Activated B cell treated with CpG ODN at 0.5 μM for 24 hours (primary cell): ENCODE measurements at regions of chr5 and their contacts with region 1.

Region 1: GRCh38 chr5:78269088-78269703 is 25.3 kb downstream of the AP3B1 start:
- DNase-seq: no peak
- ATAC-seq: peak; percentile 61
- H3K4me3 Mint-ChIP-seq: no peak overlapping the region
- H3K27ac Mint-ChIP-seq: no peak overlapping the region
- H3K4me1 Mint-ChIP-seq: peaks cover 21% of the 10 kb centered on the region
- H3K27me3 Mint-ChIP-seq: no peaks in the 10 kb centered on the region
- CTCF ChIP-seq: peak; percentile 36

Region 2: GRCh38 chr5:77143998-77144836 is 1125.0 kb before region 1 on chr5:
- CTCF ChIA-PET with region 1: no interaction called
- POLR2A ChIA-PET with region 1: no interaction called
- intact Hi-C with region 1: loop called (anchors 1 kb)
- DNase-seq: no peak
- ATAC-seq: peak; percentile 65
- H3K4me3 Mint-ChIP-seq: no peak overlapping the region
- H3K27ac Mint-ChIP-seq: no peak overlapping the region
- H3K4me1 Mint-ChIP-seq: peaks cover 2% of the 10 kb centered on the region
- H3K27me3 Mint-ChIP-seq: peaks cover 2% of the 10 kb centered on the region
- CTCF ChIP-seq: no peak

Region 3: GRCh38 chr5:77518304-77518703 is 750.9 kb before region 1 on chr5:
- CTCF ChIA-PET with region 1: no interaction called
- POLR2A ChIA-PET with region 1: no interaction called
- intact Hi-C with region 1: loop called (anchors 1 kb)
- DNase-seq: no peak
- ATAC-seq: no peak
- H3K4me3 Mint-ChIP-seq: no peak overlapping the region
- H3K27ac Mint-ChIP-seq: no peak overlapping the region
- H3K4me1 Mint-ChIP-seq: no peaks in the 10 kb centered on the region
- H3K27me3 Mint-ChIP-seq: peaks cover 5% of the 10 kb centered on the region
- CTCF ChIP-seq: no peak

Region 4: GRCh38 chr5:77645158-77645994 is 623.8 kb before region 1 on chr5:
- CTCF ChIA-PET with region 1: no interaction called
- POLR2A ChIA-PET with region 1: no interaction called
- intact Hi-C with region 1: loop called (anchors 5 kb)
- DNase-seq: peak; percentile 66
- ATAC-seq: peak; percentile 83
- H3K4me3 Mint-ChIP-seq: peak overlapping the region; percentile 75
- H3K27ac Mint-ChIP-seq: no peak overlapping the region
- H3K4me1 Mint-ChIP-seq: peaks cover 15% of the 10 kb centered on the region
- H3K27me3 Mint-ChIP-seq: peaks cover 65% of the 10 kb centered on the region
- CTCF ChIP-seq: no peak

Region 5: DNA sequence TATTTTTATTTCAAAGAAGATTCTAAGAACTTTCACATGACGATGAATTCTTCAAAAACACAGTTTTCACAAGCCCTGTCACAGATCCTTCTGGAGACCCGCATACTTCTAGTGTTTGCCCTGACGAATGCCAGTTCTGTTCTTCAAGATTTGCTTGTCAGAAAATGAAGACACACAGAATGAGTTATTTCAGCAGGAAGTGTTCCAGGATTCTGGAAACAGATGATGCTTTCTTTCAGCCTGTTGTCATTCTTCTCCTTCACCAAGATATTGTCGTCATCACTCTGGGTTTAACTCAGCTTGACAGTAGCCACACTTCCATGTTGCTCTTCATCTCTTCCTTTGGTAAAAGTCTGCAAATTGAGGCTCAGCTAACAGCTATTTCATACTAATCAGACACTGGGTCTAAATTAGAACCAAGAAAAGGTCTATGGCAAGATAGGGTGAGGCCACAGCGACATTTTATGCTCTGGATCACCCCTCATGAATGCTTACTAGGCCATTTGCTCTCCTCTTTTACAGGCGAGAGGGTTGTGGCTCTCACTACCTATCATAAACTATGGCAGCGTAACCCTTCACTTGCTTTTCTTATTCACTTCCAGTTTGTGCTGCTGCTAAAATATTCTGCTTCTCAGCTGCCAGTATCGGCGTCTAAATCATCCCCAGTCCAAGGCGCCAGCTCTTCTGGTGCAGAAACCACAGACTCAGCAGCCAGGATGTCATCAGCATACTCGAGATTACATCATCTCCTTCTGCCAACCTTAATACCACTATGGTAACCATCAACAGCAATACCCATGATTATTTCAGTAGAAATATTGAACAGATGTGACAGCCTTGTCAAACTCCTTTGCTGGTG is 333.5 kb before region 1 on chr5:
- CTCF ChIA-PET with region 1: no interaction called
- POLR2A ChIA-PET with region 1: no interaction called
- intact Hi-C with region 1: no loop called
- DNase-seq: no peak
- ATAC-seq: peak; percentile 83
- H3K4me3 Mint-ChIP-seq: peak overlapping the region; percentile 1
- H3K27ac Mint-ChIP-seq: peak overlapping the region; percentile 65
- H3K4me1 Mint-ChIP-seq: peaks cover 28% of the 10 kb centered on the region
- H3K27me3 Mint-ChIP-seq: peaks cover 4% of the 10 kb centered on the region
- CTCF ChIP-seq: no peak

Region 6: GRCh38 chr5:78041805-78042204 is 227.4 kb before region 1 on chr5:
- CTCF ChIA-PET with region 1: no interaction called
- POLR2A ChIA-PET with region 1: no interaction called
- intact Hi-C with region 1: loop called (anchors 10 kb)
- DNase-seq: no peak
- ATAC-seq: no peak
- H3K4me3 Mint-ChIP-seq: no peak overlapping the region
- H3K27ac Mint-ChIP-seq: no peak overlapping the region
- H3K4me1 Mint-ChIP-seq: no peaks in the 10 kb centered on the region
- H3K27me3 Mint-ChIP-seq: no peaks in the 10 kb centered on the region
- CTCF ChIP-seq: no peak

Region 7: GRCh38 chr5:79875230-79875629 is 1606.0 kb after region 1 on chr5:
- CTCF ChIA-PET with region 1: no interaction called
- POLR2A ChIA-PET with region 1: no interaction called
- intact Hi-C with region 1: no loop called
- DNase-seq: no peak
- ATAC-seq: no peak
- H3K4me3 Mint-ChIP-seq: no peak overlapping the region
- H3K27ac Mint-ChIP-seq: no peak overlapping the region
- H3K4me1 Mint-ChIP-seq: no peaks in the 10 kb centered on the region
- H3K27me3 Mint-ChIP-seq: peaks cover 3% of the 10 kb centered on the region
- CTCF ChIP-seq: no peak